ENCODE measurements at regions of chr3 and their contacts with region 1.

Region 1: GRCh38 chr3:196609343-196609775 is 30.1 kb upstream of the NRROS start:
- DNase-seq: peak; percentile 86
- H3K4me3 ChIP-seq: no peak overlapping the region
- H3K27ac ChIP-seq: peak overlapping the region; percentile 86
- H3K4me1 ChIP-seq: peaks cover 34% of the 10 kb centered on the region
- H3K27me3 ChIP-seq: no peaks in the 10 kb centered on the region
- CTCF ChIP-seq: peak; percentile 86

Region 2: GRCh38 chr3:196569003-196569516 is 40.3 kb before region 1 on chr3:
- intact Hi-C with region 1: no loop called
- DNase-seq: peak; percentile 17
- H3K4me3 ChIP-seq: peak overlapping the region; percentile 74
- H3K27ac ChIP-seq: peak overlapping the region; percentile 85
- H3K4me1 ChIP-seq: peaks cover 42% of the 10 kb centered on the region
- H3K27me3 ChIP-seq: no peaks in the 10 kb centered on the region
- CTCF ChIP-seq: no peak

Region 3: DNA sequence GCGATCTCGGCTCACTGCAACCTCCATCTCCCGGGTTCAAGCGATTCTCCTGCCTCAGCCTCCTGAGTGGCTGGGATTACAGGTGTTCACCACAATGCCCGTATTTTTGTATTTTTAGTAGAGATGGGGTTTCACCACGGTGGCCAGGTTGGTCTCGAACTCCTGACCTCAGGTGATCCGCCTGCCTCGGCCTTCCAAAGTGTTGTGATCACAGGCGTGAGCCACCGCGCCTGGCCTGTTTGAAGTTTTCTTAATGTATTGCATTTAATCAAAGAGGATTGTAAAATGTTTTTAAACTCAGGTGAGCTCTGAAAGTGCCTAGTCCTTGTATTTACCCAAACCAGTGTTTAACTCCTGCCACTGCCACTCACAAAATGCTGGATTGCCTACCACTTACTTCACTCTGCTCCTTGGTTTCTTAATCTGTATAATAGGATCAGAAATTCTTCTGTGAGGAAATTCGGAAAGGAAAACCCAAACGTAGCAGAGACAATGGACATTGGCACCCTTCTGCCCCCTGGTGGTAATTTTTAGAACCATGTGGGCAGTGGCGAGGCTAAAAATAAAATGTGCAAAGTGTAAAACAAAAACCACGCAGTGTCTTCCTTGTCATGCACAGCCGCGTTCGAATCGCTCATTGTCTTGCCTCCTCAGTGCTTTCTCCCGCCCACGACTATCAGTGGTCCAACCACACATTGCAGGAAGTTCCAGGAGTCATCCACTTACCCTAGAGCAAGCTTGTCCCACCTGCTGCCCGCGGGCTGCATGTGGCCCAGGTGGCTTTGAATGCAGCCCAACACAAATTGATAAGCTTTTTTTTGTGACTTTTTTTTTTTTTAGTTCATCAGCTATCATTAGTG is 75.4 kb after region 1 on chr3:
- intact Hi-C with region 1: loop called (anchors 5 kb)
- DNase-seq: peak; percentile 41
- H3K4me3 ChIP-seq: peak overlapping the region; percentile 6
- H3K27ac ChIP-seq: peak overlapping the region; percentile 24
- H3K4me1 ChIP-seq: peaks cover 9% of the 10 kb centered on the region
- H3K27me3 ChIP-seq: peaks cover 3% of the 10 kb centered on the region
- CTCF ChIP-seq: peak; percentile 94

Region 4: DNA sequence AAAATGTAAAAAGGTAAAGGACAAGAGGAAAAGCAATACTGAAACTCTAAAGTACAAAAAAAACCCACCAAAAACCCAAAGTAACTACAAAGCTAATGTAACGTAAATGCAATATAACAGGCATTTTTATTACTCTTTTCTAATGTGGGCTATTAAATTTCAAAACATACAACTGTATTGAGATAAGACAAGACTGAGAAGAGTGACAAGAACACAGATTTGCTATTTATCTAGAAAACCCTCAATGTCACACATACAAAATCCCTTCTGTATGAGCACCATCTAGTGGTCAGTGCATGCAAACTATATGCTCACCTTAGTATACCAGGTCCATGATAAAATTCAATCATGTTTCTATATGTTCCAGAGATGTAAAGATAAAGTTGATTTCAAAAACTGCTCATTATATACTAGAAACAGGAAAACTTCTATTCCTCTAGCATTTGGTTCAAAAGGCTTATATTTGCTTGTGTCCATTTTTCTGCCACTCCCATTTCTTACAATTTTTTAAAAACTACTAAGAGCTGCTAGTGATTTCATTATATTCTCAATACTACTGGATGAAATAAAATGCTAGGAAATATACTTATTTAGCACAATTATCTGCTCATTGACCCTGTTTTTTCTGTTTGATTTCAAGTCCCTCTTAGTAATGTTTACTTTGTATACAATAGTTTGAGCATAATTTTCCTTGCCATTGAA is 577.7 kb after region 1 on chr3:
- intact Hi-C with region 1: no loop called
- DNase-seq: no peak
- H3K4me3 ChIP-seq: no peak overlapping the region
- H3K27ac ChIP-seq: no peak overlapping the region
- H3K4me1 ChIP-seq: peaks cover 15% of the 10 kb centered on the region
- H3K27me3 ChIP-seq: no peaks in the 10 kb centered on the region
- CTCF ChIP-seq: peak; percentile 85

Measured in left ventricle myocardium inferior (tissue), 1 donor.